ENCODE measurements at regions of chr9 and their contacts with region 1.

Region 1: GRCh38 chr9:14462950-14463349 is 149.0 kb upstream of the NFIB start:
- DNase-seq: no peak
- H3K4me3 ChIP-seq: no peak overlapping the region
- H3K27ac ChIP-seq: no peak overlapping the region
- H3K4me1 ChIP-seq: peaks cover 3% of the 10 kb centered on the region
- H3K27me3 ChIP-seq: no peaks in the 10 kb centered on the region
- CTCF ChIP-seq: no peak

Region 2: GRCh38 chr9:13358128-13358527 is 1104.8 kb before region 1 on chr9:
- intact Hi-C with region 1: no loop called
- DNase-seq: no peak
- H3K4me3 ChIP-seq: no peak overlapping the region
- H3K27ac ChIP-seq: no peak overlapping the region
- H3K4me1 ChIP-seq: peaks cover 7% of the 10 kb centered on the region
- H3K27me3 ChIP-seq: no peaks in the 10 kb centered on the region
- CTCF ChIP-seq: no peak

Region 3: DNA sequence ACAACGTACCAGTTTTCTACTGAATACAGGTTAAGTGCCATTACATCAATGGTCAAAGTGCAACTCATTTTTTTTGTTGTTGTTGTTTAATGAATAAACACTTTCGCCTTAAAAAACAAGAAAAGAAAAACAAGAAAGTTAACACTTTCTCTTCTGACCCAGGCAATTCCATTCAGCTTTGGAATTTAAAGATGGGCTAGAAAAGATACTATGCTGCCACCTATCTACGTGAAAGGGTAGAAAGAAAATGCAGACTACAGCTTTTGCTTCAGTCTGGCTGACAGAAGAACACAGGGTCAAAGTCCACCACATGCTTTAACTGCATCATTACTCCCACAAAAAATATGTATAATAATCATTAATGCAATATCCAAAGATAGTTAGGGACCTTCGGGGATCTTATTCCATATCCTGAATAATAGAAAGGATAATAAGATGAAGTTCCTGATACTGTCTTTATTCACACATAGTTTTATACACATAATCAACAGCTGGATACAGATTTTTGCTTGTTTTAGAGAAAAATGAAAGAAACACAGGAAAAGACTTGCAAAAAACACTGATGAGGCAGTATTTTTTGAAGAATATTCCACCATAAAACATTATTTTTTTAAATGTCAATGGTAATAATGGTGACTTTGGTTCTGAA is 189.9 kb after region 1 on chr9:
- intact Hi-C with region 1: loop called (anchors 5 kb)
- DNase-seq: no peak
- H3K4me3 ChIP-seq: no peak overlapping the region
- H3K27ac ChIP-seq: no peak overlapping the region
- H3K4me1 ChIP-seq: no peaks in the 10 kb centered on the region
- H3K27me3 ChIP-seq: no peaks in the 10 kb centered on the region
- CTCF ChIP-seq: peak; percentile 67

Region 4: GRCh38 chr9:14827805-14828204 is 364.9 kb after region 1 on chr9:
- intact Hi-C with region 1: no loop called
- DNase-seq: no peak
- H3K4me3 ChIP-seq: no peak overlapping the region
- H3K27ac ChIP-seq: no peak overlapping the region
- H3K4me1 ChIP-seq: no peaks in the 10 kb centered on the region
- H3K27me3 ChIP-seq: no peaks in the 10 kb centered on the region
- CTCF ChIP-seq: no peak

Measured in left ventricle myocardium inferior (tissue), 1 donor.